ENCODE measurements at regions of chr5 and their contacts with region 1.

Region 1: DNA sequence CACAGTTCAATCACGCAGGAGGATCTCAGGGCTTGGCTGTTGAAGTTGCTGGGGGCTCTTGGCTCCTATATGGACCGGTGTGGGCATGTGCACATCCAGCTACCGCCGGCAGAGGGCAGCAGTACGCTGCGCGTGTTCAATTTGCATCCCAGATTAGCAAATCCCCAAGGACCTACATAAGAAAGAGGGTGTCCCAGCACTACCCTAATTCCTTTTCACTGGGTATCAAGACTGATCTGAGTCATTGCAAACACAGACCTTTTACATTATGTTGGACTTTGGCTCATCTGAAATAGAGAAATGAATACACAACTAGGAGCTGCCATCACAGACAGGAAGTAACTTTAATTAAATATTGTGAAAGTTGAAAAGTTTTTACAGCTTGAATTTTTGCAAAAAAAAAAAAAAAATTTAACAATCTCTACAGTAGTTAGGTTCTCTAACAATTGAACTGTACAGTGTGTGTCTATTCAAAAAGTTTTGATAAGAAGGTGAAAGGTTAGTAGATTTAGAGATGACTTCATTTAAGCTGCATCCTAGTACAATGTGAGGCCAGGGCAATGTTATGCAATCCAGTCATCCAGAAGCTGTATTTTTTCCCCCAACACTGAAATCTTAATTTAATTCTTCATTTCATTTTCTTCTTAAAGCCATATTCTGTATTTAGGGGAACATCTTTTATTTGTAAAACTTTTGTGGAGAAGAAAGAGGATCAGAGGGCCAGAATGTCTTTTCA is 404.0 kb downstream of the EBF1 start:
- DNase-seq: peak; percentile 78
- H3K4me3 Mint-ChIP-seq: no peak overlapping the region
- H3K27ac Mint-ChIP-seq: no peak overlapping the region
- H3K4me1 Mint-ChIP-seq: peaks cover 2% of the 10 kb centered on the region
- H3K27me3 Mint-ChIP-seq: no peaks in the 10 kb centered on the region

Region 2: GRCh38 chr5:158074992-158075769 is 620.6 kb before region 1 on chr5:
- CTCF ChIA-PET with region 1: interaction called, 4 read pairs
- intact Hi-C with region 1: loop called (anchors 5 kb)
- DNase-seq: peak; percentile 63
- H3K4me3 Mint-ChIP-seq: no peak overlapping the region
- H3K27ac Mint-ChIP-seq: no peak overlapping the region
- H3K4me1 Mint-ChIP-seq: peaks cover 3% of the 10 kb centered on the region
- H3K27me3 Mint-ChIP-seq: peaks cover 2% of the 10 kb centered on the region

Region 3: DNA sequence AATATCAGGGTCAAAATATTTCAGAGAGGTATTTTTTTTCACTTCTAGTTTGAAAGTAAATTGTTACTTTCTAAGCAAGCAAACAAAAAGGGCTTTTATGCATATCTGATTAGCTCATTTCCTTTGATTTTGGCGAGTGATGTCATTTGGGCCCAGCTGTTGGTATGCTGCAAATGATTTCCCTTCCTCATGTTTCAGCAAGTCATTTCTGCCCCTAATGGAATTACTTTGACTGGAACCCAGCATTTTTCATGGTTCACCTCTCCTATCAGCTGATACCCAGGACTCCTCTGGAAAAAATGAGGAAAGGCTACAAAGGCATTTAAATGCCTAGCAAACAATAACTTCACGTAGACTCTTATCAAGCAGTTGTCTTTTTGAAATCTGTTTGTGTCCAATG is 96.6 kb before region 1 on chr5:
- CTCF ChIA-PET with region 1: no interaction called
- intact Hi-C with region 1: no loop called
- DNase-seq: no peak
- H3K4me3 Mint-ChIP-seq: no peak overlapping the region
- H3K27ac Mint-ChIP-seq: no peak overlapping the region
- H3K4me1 Mint-ChIP-seq: no peaks in the 10 kb centered on the region
- H3K27me3 Mint-ChIP-seq: no peaks in the 10 kb centered on the region

Region 4: DNA sequence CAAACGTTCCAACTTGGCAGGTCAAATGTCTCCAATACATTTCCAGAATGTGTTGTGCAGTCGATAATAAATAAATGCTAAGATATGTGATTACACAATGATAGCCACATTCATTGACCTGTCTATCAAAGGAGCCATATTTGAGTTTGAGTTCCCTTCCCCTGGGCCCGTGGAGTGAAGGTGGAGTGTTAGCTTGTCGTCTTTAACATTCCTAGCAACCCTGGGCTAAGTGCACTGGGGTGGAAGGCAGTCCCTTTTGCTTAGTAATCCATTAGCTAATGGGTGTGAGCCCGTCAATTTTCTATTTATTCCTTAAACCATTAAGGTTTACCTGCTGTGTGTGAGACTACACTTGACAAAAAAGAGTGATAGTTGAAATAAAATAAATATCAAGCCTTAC is 11.3 kb before region 1 on chr5:
- CTCF ChIA-PET with region 1: interaction called, 11 read pairs
- intact Hi-C with region 1: no loop called
- DNase-seq: no peak
- H3K4me3 Mint-ChIP-seq: no peak overlapping the region
- H3K27ac Mint-ChIP-seq: no peak overlapping the region
- H3K4me1 Mint-ChIP-seq: no peaks in the 10 kb centered on the region
- H3K27me3 Mint-ChIP-seq: peaks cover 5% of the 10 kb centered on the region

Region 5: GRCh38 chr5:159049844-159050315 is 354.1 kb after region 1 on chr5:
- CTCF ChIA-PET with region 1: no interaction called
- intact Hi-C with region 1: loop called (anchors 2 kb)
- DNase-seq: no peak
- H3K4me3 Mint-ChIP-seq: no peak overlapping the region
- H3K27ac Mint-ChIP-seq: no peak overlapping the region
- H3K4me1 Mint-ChIP-seq: peaks cover 8% of the 10 kb centered on the region
- H3K27me3 Mint-ChIP-seq: peaks cover 56% of the 10 kb centered on the region

Region 6: GRCh38 chr5:159106569-159107282 is 411.0 kb after region 1 on chr5:
- CTCF ChIA-PET with region 1: interaction called, 120 read pairs
- intact Hi-C with region 1: loop called (anchors 1 kb)
- DNase-seq: peak; percentile 80
- H3K4me3 Mint-ChIP-seq: peak overlapping the region; percentile 71
- H3K27ac Mint-ChIP-seq: no peak overlapping the region
- H3K4me1 Mint-ChIP-seq: peaks cover 24% of the 10 kb centered on the region
- H3K27me3 Mint-ChIP-seq: peaks cover 45% of the 10 kb centered on the region

Region 7: DNA sequence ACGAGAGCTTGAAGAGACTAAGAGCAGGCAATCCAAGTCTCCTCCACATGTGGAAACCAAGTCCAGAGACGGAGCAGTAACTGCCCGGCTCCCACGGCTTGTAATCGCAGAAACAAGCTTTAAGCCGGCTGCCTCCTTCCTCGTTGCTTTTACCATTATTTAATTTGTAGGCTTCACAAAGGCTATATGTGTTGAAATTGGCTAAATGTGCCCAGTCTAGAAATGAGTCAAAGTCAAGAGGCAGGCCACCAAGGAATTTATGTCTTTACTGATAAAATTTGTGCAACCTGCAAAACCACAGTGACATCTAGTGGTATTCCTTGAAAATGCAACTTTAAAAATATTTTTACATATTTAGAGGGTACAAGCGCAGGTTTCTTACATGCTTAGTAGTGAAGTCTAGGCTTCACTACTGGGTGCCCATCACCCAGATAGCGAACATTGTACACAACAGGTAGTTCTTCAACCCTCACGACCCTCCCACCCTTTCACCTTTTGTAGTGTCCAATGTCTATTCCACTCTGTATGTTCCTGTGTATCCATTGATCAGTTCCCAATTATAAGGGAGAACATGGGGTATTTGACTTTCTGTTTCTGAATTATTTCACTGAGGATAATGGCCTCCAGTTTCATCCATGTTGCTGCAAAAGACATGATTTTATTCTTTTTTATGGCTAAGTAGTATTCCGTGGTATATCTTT is 437.4 kb after region 1 on chr5:
- CTCF ChIA-PET with region 1: interaction called, 26 read pairs
- intact Hi-C with region 1: loop called (anchors 1 kb)
- DNase-seq: no peak
- H3K4me3 Mint-ChIP-seq: no peak overlapping the region
- H3K27ac Mint-ChIP-seq: no peak overlapping the region
- H3K4me1 Mint-ChIP-seq: no peaks in the 10 kb centered on the region
- H3K27me3 Mint-ChIP-seq: peaks cover 3% of the 10 kb centered on the region

Measured in activated naive CD4-positive, alpha-beta T cell treated with anti-CD3 and anti-CD28 coated beads for 36 hours (primary cell).